Spleen (tissue), 13 donors: ENCODE measurements at regions of chr11 and their contacts with region 1.

Region 1: DNA sequence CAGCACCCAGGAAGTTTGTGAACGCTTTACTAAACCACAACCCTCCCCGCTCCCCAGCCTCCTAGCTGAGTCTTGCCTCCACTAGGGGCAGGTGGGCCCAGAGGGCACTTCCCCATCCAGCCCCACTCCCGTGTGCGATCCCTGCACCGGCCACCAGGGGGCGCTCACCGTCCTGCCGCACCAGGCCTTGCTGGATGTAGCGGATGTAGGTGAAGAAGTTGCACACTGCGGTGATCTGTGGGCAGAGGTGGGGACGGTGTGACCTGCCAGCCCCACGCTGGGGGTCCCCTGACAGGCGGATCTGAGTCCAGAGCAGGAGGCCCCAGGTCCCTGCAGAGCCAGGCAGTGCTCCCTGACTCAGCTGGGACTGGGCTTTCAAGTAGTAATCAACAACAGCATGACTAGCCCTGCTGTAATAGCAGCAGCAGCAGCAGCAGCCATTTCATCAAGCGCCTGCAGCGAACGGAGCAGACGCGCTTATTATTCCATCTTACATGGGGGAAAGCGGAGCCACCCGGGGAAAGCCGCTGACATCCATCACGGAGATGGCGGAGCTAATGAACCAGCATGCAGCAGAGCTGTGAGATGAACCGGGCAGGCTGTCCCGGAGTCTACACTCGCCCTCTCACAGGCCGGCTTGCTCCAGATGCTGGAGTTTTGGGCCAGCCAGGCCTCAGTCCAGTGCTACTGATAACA is 7.9 kb upstream of the FADS3 start:
- DNase-seq: peak; percentile 100
- H3K4me3 ChIP-seq: peak overlapping the region in 1 of 8 donors; percentile 2
- H3K27ac ChIP-seq: peak overlapping the region in 4 of 8 donors; percentile 6 to 61 (median 52)
- H3K4me1 ChIP-seq: peaks cover 7 to 44% (median 22%) of the 10 kb centered on the region in 6 donors
- H3K27me3 ChIP-seq: peaks cover 0 to 4% (median 0%) of the 10 kb centered on the region in 7 donors
- CTCF ChIP-seq: peak; percentile 99 to 100 (median 100)
- POLR2A ChIP-seq: no peak

Region 2: GRCh38 chr11:61947486-61948210 is 48.4 kb after region 1 on chr11:
- intact Hi-C with region 1: loop called (anchors 2 kb)
- DNase-seq: peak; percentile 92
- H3K4me3 ChIP-seq: no peak overlapping the region
- H3K27ac ChIP-seq: peak overlapping the region in 1 of 8 donors; percentile 5
- H3K4me1 ChIP-seq: peaks cover 4 to 33% (median 16%) of the 10 kb centered on the region in 6 donors
- H3K27me3 ChIP-seq: no peaks in the 10 kb centered on the region
- CTCF ChIP-seq: peak; percentile 79 to 96 (median 89)
- POLR2A ChIP-seq: no peak

Region 3: DNA sequence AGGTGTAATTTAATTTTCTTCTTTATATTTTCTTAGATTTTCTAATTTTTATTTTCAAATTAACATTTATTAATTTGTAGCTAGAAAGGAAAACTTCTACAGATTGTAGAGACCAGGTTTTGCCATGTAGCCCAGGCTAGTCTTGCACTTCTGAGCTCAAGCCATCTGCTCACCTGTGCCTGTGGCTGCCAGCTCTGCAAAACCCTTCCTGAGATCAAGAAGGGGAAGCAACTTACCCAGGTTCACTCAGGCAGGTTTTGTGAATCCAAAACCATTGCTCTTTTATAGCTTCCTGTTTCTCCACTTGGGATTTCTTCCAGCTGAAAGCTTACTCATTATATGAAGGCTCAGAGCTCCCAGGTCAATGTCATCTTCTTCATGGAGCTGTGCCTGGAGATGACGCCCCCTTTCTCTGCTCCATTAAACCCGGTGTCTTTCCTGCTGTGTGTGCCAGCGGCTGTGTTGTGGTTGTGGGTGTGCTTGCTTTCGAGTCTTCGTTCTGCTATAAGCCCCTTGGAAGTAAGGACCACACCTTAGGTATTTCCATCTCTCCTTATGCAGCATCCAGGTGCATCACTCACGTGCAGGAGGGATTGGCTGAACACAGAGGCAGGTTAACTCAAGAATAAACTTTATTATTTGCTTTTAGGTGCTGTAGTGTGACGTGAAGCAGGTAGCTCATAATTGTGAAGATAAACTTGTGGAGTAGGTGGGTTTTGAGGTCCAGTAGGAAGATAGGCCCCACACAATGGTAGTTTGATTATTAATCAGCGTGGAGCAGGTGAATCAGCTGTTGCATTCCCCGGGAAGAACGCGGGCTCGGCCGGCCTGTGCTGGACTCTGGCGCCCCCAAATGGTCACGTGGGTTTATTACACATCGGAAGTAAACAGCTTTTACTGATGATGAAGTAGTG is 182.3 kb after region 1 on chr11:
- intact Hi-C with region 1: loop called (anchors 2 kb)
- DNase-seq: peak; percentile 94
- H3K4me3 ChIP-seq: peak overlapping the region in 1 of 8 donors; percentile 37
- H3K27ac ChIP-seq: peak overlapping the region in 1 of 8 donors; percentile 13
- H3K4me1 ChIP-seq: peaks cover 0 to 13% (median 9%) of the 10 kb centered on the region in 6 donors
- H3K27me3 ChIP-seq: no peaks in the 10 kb centered on the region
- CTCF ChIP-seq: peak; percentile 75 to 91 (median 86)
- POLR2A ChIP-seq: no peak